CD8-positive, alpha-beta T cell (primary cell): ENCODE measurements at regions of chr10 and their contacts with region 1.

Region 1: DNA sequence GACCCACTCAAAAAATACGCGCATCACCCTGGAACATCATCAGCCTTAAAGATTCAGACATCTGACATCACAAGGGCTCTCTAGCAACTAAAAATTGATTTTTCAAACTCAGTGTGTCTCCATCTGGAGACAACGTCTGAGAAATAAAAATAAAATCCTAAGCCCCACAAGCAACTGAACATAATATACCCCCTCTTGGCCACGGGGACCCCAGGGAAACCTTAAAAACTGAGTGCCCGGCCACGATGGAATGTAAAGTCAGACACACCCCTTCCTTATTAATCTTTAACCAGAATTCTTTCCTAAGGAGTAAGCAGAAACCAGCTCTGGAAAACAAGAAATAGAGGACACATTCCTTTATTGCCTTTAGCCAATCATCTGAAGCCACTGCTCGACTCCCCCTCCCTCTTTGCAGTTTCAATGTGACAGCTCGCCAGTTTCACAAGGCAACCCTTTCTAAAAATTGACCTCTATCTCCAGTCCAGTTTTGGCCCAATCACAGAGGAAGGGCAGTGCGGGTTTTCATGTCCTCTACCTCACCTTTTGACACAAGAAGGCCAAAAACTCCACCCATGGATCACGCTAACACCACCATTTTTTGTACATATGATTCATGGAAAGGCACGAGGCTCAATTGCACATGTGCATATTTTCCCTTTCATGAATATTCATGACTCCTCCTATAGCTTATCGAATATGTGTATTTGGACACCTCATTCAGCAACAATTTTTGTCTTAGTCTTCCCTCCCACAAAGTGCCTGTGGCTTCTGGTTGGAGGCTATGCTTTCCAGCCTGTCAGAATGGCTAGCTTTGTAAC is 24.2 kb downstream of the IFIT3 start:
- DNase-seq: no peak
- ATAC-seq: no peak
- H3K4me3 ChIP-seq: no peak overlapping the region
- H3K4me3 Mint-ChIP-seq: no peak overlapping the region
- H3K27ac ChIP-seq: no peak overlapping the region
- H3K27ac Mint-ChIP-seq: no peak overlapping the region
- H3K4me1 ChIP-seq: no peaks in the 10 kb centered on the region
- H3K4me1 Mint-ChIP-seq: no peaks in the 10 kb centered on the region
- H3K27me3 ChIP-seq: no peaks in the 10 kb centered on the region
- H3K27me3 Mint-ChIP-seq: peaks cover 14% of the 10 kb centered on the region
- CTCF ChIP-seq: no peak

Region 2: GRCh38 chr10:89278034-89278535 is 73.9 kb before region 1 on chr10:
- CTCF ChIA-PET with region 1: no interaction called
- POLR2A ChIA-PET with region 1: no interaction called
- intact Hi-C with region 1: loop called in 1 of 2 experiments (anchors 5 kb)
- DNase-seq: no peak
- ATAC-seq: no peak
- H3K4me3 ChIP-seq: no peak overlapping the region
- H3K4me3 Mint-ChIP-seq: no peak overlapping the region
- H3K27ac ChIP-seq: no peak overlapping the region
- H3K27ac Mint-ChIP-seq: no peak overlapping the region
- H3K4me1 ChIP-seq: no peaks in the 10 kb centered on the region
- H3K4me1 Mint-ChIP-seq: no peaks in the 10 kb centered on the region
- H3K27me3 ChIP-seq: no peaks in the 10 kb centered on the region
- H3K27me3 Mint-ChIP-seq: peaks cover 4% of the 10 kb centered on the region
- CTCF ChIP-seq: no peak

Region 3: DNA sequence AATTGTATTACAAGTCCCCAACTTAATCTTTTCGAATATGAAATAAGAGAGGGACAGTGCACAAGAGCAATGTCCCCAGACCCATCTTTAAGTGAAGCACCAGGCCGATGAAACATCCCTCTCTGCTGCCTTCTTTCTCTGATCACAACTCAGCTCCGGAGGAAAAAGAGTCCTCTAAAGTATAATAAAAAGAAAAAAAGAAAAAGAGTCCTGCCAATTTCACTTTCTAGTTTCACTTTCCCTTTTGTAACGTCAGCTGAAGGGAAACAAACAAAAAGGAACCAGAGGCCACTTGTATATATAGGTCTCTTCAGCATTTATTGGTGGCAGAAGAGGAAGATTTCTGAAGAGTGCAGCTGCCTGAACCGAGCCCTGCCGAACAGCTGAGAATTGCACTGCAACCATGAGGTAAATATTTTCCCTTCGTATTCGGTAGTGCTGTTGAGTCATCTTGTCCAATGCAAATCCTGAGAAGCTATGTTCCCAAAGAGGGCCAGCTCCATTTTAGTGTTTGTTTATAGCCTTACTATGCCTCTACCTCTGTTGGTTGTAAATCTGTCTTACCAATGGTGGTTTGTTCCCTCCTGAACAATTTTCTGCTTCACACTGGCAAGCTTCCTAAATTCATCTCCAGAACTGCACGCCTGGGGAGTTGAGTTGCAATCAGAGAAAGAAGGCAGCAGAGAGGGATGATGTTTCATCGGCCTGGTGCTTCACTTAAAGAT is 50.1 kb before region 1 on chr10 and contains the start of gene IFIT2:
- CTCF ChIA-PET with region 1: no interaction called
- POLR2A ChIA-PET with region 1: no interaction called
- intact Hi-C with region 1: no loop called
- DNase-seq: peak in 6 of 9 experiments; percentile 11 to 83 (median 46)
- ATAC-seq: peak; percentile 76
- H3K4me3 ChIP-seq: peak within 1 kb of the TSS; percentile 51 to 76
- H3K4me3 Mint-ChIP-seq: peak within 1 kb of the TSS; percentile 88
- H3K27ac ChIP-seq: peak within 1 kb of the TSS; percentile 66 to 96
- H3K27ac Mint-ChIP-seq: peak within 1 kb of the TSS; percentile 98
- H3K4me1 ChIP-seq: peaks cover 24% of the 10 kb centered on the region
- H3K4me1 Mint-ChIP-seq: peaks cover 34% of the 10 kb centered on the region
- H3K27me3 ChIP-seq: no peaks in the 10 kb centered on the region
- H3K27me3 Mint-ChIP-seq: no peaks in the 10 kb centered on the region
- CTCF ChIP-seq: no peak
- total RNA-seq, gene IFIT2: 18.4 TPM

Region 4: DNA sequence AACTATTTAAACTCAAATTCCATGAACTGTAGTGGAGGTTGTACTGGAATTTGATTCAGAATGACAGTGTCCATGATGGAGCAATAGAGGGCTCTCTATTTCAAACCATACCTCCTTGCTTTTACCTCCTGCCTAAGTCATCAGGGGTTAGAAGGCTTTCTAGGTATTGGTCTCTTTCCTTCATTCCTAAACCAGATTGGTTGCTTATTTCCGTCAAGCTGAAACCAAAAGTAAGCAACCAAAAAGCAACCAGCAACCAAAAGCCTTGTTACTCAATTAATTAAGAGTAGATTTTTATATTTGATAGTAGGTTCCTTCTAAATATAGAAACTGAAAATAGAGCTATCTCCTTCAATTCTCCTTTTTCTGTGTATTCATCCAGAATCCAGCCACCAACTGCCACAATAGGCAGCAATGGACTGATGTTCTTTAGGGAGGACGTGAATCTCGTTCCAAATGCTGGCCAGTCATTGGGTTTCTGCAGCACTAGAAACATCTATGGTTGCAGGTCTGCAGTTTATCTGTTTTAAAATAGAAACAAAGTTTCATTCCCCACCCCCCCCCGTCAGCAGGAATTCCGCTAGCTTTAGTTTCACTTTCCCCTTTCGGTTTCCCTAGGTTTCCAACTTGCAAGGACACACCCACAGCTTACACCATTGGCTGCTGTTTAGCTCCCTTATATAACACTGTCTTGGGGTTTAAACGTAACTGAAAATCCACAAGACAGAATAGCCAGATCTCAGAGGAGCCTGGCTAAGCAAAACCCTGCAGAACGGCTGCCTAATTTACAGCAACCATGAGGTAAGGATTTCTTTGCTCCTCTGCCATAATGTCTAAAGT is 40.1 kb after region 1 on chr10 and contains the start of gene IFIT1:
- CTCF ChIA-PET with region 1: no interaction called
- POLR2A ChIA-PET with region 1: no interaction called
- intact Hi-C with region 1: no loop called
- DNase-seq: peak in 8 of 9 experiments; percentile 23 to 92 (median 54)
- ATAC-seq: peak; percentile 93
- H3K4me3 ChIP-seq: peak within 1 kb of the TSS; percentile 68 to 79
- H3K4me3 Mint-ChIP-seq: peak within 1 kb of the TSS; percentile 90
- H3K27ac ChIP-seq: peak within 1 kb of the TSS; percentile 65 to 80
- H3K27ac Mint-ChIP-seq: peak within 1 kb of the TSS; percentile 88
- H3K4me1 ChIP-seq: peaks cover 15% of the 10 kb centered on the region
- H3K4me1 Mint-ChIP-seq: peaks cover 35% of the 10 kb centered on the region
- H3K27me3 ChIP-seq: no peaks in the 10 kb centered on the region
- H3K27me3 Mint-ChIP-seq: no peaks in the 10 kb centered on the region
- CTCF ChIP-seq: no peak
- total RNA-seq, gene IFIT1: 1.9 to 2.5 TPM

Region 5: DNA sequence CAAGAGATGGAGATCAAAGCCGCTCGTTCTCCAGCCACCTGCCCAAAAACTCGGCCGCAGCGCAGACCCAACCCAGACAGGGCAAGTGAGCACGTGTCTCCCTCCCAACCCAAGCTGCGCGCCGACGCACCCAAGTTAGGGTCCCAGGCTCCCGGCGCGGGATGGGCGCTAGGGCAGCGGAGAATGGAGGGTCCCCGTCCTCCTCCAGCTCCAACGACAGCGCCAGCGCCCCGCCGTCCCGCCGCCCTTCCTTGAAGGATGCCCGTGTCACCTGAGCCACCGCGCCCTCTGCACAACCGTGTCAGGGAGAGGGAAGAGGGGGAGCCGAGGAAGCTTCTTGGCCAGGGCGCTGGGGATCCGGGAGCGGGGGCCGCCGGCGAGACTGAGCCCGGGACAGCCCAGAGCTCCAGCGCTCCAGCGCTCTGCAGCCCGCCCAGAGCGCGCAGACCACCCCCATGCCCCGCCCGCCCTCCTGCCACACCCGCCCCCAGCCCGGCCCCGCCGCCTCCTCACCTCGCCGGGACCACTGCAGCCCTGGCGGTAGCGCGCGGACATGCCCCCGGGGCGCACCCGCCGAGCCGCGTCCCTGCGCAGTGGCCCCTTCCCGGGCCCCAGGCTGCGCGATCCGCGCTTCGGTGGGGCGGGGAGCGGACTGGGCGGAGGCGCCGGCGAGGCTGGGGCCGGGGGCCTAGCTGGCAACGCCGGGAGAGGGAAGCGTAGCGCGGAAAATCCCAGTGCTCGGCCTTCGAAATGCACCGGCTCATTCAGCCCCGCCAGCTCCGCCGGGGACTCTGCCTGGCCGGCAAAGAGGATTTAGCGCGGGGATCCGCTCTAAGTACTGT is 183.4 kb after region 1 on chr10 and contains the start of gene SLC16A12:
- CTCF ChIA-PET with region 1: no interaction called
- POLR2A ChIA-PET with region 1: no interaction called
- intact Hi-C with region 1: no loop called
- DNase-seq: no peak
- ATAC-seq: no peak
- H3K4me3 ChIP-seq: no peak within 1 kb of the TSS
- H3K4me3 Mint-ChIP-seq: peak within 1 kb of the TSS; percentile 9
- H3K27ac ChIP-seq: no peak within 1 kb of the TSS
- H3K27ac Mint-ChIP-seq: no peak within 1 kb of the TSS
- H3K4me1 ChIP-seq: no peaks in the 10 kb centered on the region
- H3K4me1 Mint-ChIP-seq: peaks cover 13% of the 10 kb centered on the region
- H3K27me3 ChIP-seq: peaks cover 7 to 15% of the 10 kb centered on the region in 2 experiments
- H3K27me3 Mint-ChIP-seq: peaks cover 56% of the 10 kb centered on the region
- CTCF ChIP-seq: no peak
- total RNA-seq, gene SLC16A12: not detected